ENCODE measurements at regions of chr15 and their contacts with region 1.

Region 1: GRCh38 chr15:48358229-48358641 is 27.0 kb downstream of the DUT start:
- DNase-seq: peak; percentile 82
- H3K4me3 ChIP-seq: peak overlapping the region in 1 of 3 experiments; percentile 4
- H3K27ac ChIP-seq: peak overlapping the region; percentile 28
- H3K4me1 ChIP-seq: peaks cover 22% of the 10 kb centered on the region
- H3K27me3 ChIP-seq: no peaks in the 10 kb centered on the region
- CTCF ChIP-seq: peak; percentile 35 to 37
- POLR2A ChIP-seq: no peak

Region 2: DNA sequence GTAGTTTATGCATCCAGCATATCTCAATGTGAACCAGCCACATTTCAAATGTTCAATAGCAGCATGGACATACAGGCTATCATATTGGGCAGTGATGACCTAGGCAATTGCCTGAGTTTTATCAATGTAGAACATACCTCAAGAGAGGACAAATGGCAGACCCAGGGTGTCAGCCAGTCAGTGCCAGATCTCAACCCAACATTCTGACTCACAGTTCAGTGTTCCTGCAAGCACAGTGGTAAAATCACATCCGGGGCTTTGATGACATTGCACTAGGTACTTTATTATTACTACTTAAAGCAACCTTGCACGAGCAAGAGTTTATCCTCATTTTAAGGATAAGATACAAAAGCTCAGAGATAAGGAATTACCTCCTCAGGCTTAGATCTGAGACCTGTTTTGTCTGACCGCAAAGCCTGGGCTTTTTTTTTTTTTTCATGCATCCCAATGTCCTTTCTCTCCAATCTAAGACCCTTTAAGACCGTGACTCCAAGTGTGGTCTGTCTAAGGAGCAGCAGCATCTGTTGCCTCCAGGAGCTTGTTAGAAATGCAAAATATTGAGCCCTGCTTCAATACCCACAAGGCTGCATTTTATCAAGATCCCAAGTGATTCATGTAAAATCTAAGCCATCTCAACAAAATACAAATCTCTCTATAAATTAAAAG is 92.1 kb before region 1 on chr15:
- CTCF ChIA-PET with region 1: no interaction called
- POLR2A ChIA-PET with region 1: no interaction called
- dilution Hi-C with region 1: no loop called
- intact Hi-C with region 1: no loop called
- DNase-seq: no peak
- H3K4me3 ChIP-seq: no peak overlapping the region
- H3K27ac ChIP-seq: no peak overlapping the region
- H3K4me1 ChIP-seq: no peaks in the 10 kb centered on the region
- H3K27me3 ChIP-seq: peaks cover 1 to 10% of the 10 kb centered on the region in 2 experiments
- CTCF ChIP-seq: no peak
- POLR2A ChIP-seq: no peak

Region 3: GRCh38 chr15:48373821-48374451 is 15.7 kb after region 1 on chr15:
- CTCF ChIA-PET with region 1: interaction called, 17 read pairs
- POLR2A ChIA-PET with region 1: no interaction called
- dilution Hi-C with region 1: no loop called
- intact Hi-C with region 1: no loop called
- DNase-seq: peak; percentile 84
- H3K4me3 ChIP-seq: peak overlapping the region in 2 of 3 experiments; percentile 22 to 40
- H3K27ac ChIP-seq: no peak overlapping the region
- H3K4me1 ChIP-seq: peaks cover 10% of the 10 kb centered on the region
- H3K27me3 ChIP-seq: no peaks in the 10 kb centered on the region
- CTCF ChIP-seq: no peak
- POLR2A ChIP-seq: no peak

Region 4: GRCh38 chr15:48449734-48450133 is 91.5 kb after region 1 on chr15:
- CTCF ChIA-PET with region 1: interaction called, 31 read pairs
- POLR2A ChIA-PET with region 1: no interaction called
- dilution Hi-C with region 1: no loop called
- intact Hi-C with region 1: loop called (anchors 1 kb)
- DNase-seq: no peak
- H3K4me3 ChIP-seq: no peak overlapping the region
- H3K27ac ChIP-seq: no peak overlapping the region
- H3K4me1 ChIP-seq: peaks cover 38% of the 10 kb centered on the region
- H3K27me3 ChIP-seq: no peaks in the 10 kb centered on the region
- CTCF ChIP-seq: no peak
- POLR2A ChIP-seq: no peak

Region 5: GRCh38 chr15:48507416-48508065 is 149.3 kb after region 1 on chr15:
- CTCF ChIA-PET with region 1: interaction called, 17 read pairs
- POLR2A ChIA-PET with region 1: no interaction called
- dilution Hi-C with region 1: no loop called
- intact Hi-C with region 1: loop called (anchors 5 kb)
- DNase-seq: peak; percentile 77
- H3K4me3 ChIP-seq: no peak overlapping the region
- H3K27ac ChIP-seq: no peak overlapping the region
- H3K4me1 ChIP-seq: peaks cover 5% of the 10 kb centered on the region
- H3K27me3 ChIP-seq: no peaks in the 10 kb centered on the region
- CTCF ChIP-seq: peak; percentile 65 to 73
- POLR2A ChIP-seq: no peak

Region 6: GRCh38 chr15:48645558-48646330 is 287.5 kb after region 1 on chr15 and contains the start of gene FBN1:
- CTCF ChIA-PET with region 1: interaction called, 11 read pairs
- POLR2A ChIA-PET with region 1: no interaction called
- dilution Hi-C with region 1: no loop called
- intact Hi-C with region 1: loop called (anchors 1 kb)
- DNase-seq: peak; percentile 88
- H3K4me3 ChIP-seq: peak within 1 kb of the TSS; percentile 50 to 92 (median 77)
- H3K27ac ChIP-seq: peak within 1 kb of the TSS; percentile 70
- H3K4me1 ChIP-seq: peaks cover 34% of the 10 kb centered on the region
- H3K27me3 ChIP-seq: no peaks in the 10 kb centered on the region
- CTCF ChIP-seq: no peak
- POLR2A ChIP-seq: peak; percentile 57
- total RNA-seq, gene FBN1: 88.1 and 111 TPM in 2 replicates

Region 7: DNA sequence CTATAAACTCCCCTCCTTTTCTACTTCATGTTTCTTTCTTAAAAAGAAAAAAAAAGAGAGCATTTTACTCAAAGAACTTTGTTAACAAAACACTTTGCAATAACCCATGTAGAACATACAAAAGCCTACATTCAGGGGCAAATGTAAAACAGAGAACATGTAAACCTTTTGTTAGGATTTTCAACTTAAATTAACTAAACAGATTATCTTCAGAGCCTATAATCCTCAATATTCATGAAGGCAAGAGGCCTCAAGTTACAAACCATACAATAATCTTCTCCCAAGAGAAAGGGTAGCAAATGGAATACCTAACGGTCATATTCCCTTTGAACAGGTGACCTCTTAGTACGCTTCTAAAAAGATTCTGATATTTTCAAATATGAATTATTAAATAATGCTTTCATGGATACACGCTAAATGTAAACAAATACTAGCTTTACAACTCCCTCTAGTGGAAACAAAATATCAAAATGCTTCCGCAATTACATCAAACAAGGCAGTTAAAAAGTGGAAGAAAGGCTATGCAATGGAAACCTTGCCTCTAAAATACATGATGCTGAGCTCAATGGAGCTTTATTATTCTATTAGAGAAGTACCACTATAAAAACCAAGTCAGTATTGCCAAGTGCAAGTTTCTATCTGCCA is 442.7 kb after region 1 on chr15:
- CTCF ChIA-PET with region 1: interaction called, 91 read pairs
- POLR2A ChIA-PET with region 1: no interaction called
- dilution Hi-C with region 1: no loop called
- intact Hi-C with region 1: loop called (anchors 1 kb)
- DNase-seq: peak; percentile 72
- H3K4me3 ChIP-seq: no peak overlapping the region
- H3K27ac ChIP-seq: no peak overlapping the region
- H3K4me1 ChIP-seq: peaks cover 1% of the 10 kb centered on the region
- H3K27me3 ChIP-seq: no peaks in the 10 kb centered on the region
- CTCF ChIP-seq: peak; percentile 24 to 25
- POLR2A ChIP-seq: no peak

Region 8: GRCh38 chr15:48861813-48862431 is 503.7 kb after region 1 on chr15:
- CTCF ChIA-PET with region 1: interaction called, 69 read pairs
- POLR2A ChIA-PET with region 1: no interaction called
- dilution Hi-C with region 1: no loop called
- intact Hi-C with region 1: no loop called
- DNase-seq: peak; percentile 58
- H3K4me3 ChIP-seq: no peak overlapping the region
- H3K27ac ChIP-seq: no peak overlapping the region
- H3K4me1 ChIP-seq: no peaks in the 10 kb centered on the region
- H3K27me3 ChIP-seq: no peaks in the 10 kb centered on the region
- CTCF ChIP-seq: peak; percentile 51 to 57
- POLR2A ChIP-seq: no peak